HAP-1 (cell line): ENCODE measurements at regions of chr3 and their contacts with region 1.

Region 1: GRCh38 chr3:48240711-48241491 is at the start of gene ZNF589:
- DNase-seq: peak; percentile 96
- H3K4me3 ChIP-seq: peak within 1 kb of the TSS; percentile 71
- H3K4me1 ChIP-seq: peaks cover 38% of the 10 kb centered on the region
- H3K27me3 ChIP-seq: no peaks in the 10 kb centered on the region

Region 2: DNA sequence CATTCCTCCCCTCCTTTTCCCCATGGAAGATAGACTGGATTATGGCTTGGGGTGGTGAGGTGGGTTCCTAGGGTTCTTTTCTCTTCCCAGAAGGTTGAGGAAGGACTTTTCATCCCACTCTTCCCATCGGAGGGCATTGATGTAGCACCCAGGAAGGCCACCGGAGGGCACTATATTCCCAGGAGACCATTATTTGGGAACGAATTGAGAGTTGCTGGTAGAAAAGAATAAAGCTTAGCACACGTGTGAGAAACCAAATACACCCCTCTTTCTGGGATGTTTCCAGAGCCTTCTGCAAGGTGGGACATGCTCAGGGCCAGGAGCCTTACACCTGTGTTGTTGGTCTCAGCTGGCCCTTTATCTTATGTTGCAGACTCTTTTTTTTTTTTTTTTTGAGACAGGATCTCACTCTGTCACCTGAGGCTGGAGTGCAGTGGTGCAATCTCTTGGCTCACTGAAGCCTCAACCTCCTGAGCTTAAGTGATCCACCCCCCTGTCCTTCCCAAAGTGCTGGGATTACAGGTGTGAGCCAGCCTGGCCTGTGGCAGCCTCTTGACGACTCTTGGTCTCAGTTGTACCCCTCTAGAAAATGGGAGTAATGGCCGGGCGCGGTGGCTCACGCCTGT is 46.3 kb before region 1 on chr3:
- in situ Hi-C with region 1: loop called (anchors 10 kb)
- DNase-seq: peak; percentile 83 to 89
- H3K4me3 ChIP-seq: no peak overlapping the region
- H3K4me1 ChIP-seq: peaks cover 16% of the 10 kb centered on the region
- H3K27me3 ChIP-seq: no peaks in the 10 kb centered on the region

Region 3: GRCh38 chr3:48543271-48543866 is 302.5 kb after region 1 on chr3:
- in situ Hi-C with region 1: no loop called
- DNase-seq: no peak
- H3K4me3 ChIP-seq: no peak overlapping the region
- H3K4me1 ChIP-seq: no peaks in the 10 kb centered on the region
- H3K27me3 ChIP-seq: no peaks in the 10 kb centered on the region